H1 (cell line): ENCODE measurements at regions of chr1 and their contacts with region 1.

Region 1: GRCh38 chr1:207321079-207321789 is at the start of gene CD55:
- DNase-seq: peak; percentile 90 to 96
- H3K4me3 ChIP-seq: peak within 1 kb of the TSS; percentile 60 to 92 (median 84)
- H3K27ac ChIP-seq: peak within 1 kb of the TSS; percentile 94
- H3K4me1 ChIP-seq: peaks cover 1 to 7% (median 5%) of the 10 kb centered on the region in 4 experiments; a peak in 3 of 7 replicates
- H3K27me3 ChIP-seq: no peaks in the 10 kb centered on the region
- CTCF ChIP-seq: peak; percentile 8 to 54 (median 29)
- EP300 ChIP-seq: no peak
- POLR2A ChIP-seq: peak; percentile 76 to 84
- RAD21 ChIP-seq: peak; percentile 22 to 45; a peak in 3 of 4 replicates
- total RNA-seq, gene CD55: 22.8 and 26.8 TPM in 2 replicates

Region 2: GRCh38 chr1:207336559-207337467 is 15.6 kb after region 1 on chr1:
- CTCF ChIA-PET with region 1: interaction called, 7 read pairs
- POLR2A ChIA-PET with region 1: interaction called, 18 read pairs
- DNase-seq: no peak
- H3K4me3 ChIP-seq: no peak overlapping the region
- H3K27ac ChIP-seq: no peak overlapping the region
- H3K4me1 ChIP-seq: no peaks in the 10 kb centered on the region
- H3K27me3 ChIP-seq: no peaks in the 10 kb centered on the region
- CTCF ChIP-seq: no peak
- EP300 ChIP-seq: no peak
- POLR2A ChIP-seq: no peak
- RAD21 ChIP-seq: no peak